Naive thymus-derived CD8-positive, alpha-beta T cell (primary cell): ENCODE measurements at regions of chr22 and their contacts with region 1.

Region 1: GRCh38 chr22:36481393-36482168 is at the start of gene TXN2:
- DNase-seq: peak; percentile 91 to 99 (median 98)
- ATAC-seq: peak; percentile 89
- H3K4me3 Mint-ChIP-seq: peak within 1 kb of the TSS; percentile 91 to 98 (median 96)
- H3K27ac Mint-ChIP-seq: peak within 1 kb of the TSS; percentile 90 to 99 (median 97)
- H3K4me1 Mint-ChIP-seq: peaks cover 17 to 33% (median 21%) of the 10 kb centered on the region in 4 donors
- H3K27me3 Mint-ChIP-seq: no peaks in the 10 kb centered on the region
- polyA plus RNA-seq, gene TXN2: 145 to 158 (median 157) TPM

Region 2: DNA sequence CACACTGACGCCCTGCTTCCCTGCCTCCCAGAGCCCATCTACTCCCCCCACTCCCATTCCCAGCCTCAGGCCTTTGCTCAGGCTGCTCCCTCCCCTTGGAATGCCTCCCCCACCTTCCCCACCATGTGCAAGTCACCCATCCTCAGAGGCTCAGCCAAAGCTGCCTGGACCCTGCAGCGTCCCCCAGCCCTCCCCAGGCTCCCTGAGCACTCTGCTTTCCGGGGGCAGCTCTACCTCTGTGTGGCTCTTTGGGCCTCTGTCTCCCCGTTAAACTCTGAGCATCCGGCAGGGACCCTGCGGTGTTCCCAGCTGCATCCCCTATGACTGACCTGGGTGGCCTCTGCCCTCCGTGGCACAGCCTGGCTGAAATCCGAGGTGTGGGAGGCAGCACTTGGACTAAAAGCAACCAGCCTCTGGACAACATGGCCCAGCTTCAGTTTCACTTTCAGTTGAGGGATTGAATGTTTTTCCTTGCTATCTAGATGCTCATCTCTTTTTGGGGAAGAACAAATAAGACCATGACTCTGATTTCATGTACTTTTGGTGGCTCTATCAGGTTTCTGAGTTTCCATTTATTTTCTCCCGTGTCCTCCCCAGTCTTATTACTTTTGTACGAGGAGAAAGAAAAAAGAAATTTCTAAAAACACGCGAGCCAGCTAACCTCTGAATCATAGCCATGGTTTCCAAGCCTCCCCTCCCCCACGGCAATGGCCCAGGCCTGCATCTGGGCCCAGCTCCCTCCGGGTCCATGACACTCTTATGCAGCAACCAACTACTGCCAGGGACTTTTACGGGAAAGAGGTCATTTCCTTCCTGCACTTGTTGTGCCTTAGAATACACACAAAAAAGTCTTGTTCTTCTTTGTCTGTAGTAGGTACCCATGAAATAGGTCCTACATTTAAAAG is 324.8 kb before region 1 on chr22:
- POLR2A ChIA-PET with region 1: interaction called, 10 read pairs
- DNase-seq: peak; percentile 53 to 77 (median 66)
- ATAC-seq: peak; percentile 26 to 65
- H3K4me3 Mint-ChIP-seq: peak overlapping the region; percentile 89 to 98 (median 94)
- H3K27ac Mint-ChIP-seq: peak overlapping the region; percentile 96 to 99 (median 98)
- H3K4me1 Mint-ChIP-seq: peaks cover 63 to 96% (median 91%) of the 10 kb centered on the region in 4 donors
- H3K27me3 Mint-ChIP-seq: no peaks in the 10 kb centered on the region

Region 3: DNA sequence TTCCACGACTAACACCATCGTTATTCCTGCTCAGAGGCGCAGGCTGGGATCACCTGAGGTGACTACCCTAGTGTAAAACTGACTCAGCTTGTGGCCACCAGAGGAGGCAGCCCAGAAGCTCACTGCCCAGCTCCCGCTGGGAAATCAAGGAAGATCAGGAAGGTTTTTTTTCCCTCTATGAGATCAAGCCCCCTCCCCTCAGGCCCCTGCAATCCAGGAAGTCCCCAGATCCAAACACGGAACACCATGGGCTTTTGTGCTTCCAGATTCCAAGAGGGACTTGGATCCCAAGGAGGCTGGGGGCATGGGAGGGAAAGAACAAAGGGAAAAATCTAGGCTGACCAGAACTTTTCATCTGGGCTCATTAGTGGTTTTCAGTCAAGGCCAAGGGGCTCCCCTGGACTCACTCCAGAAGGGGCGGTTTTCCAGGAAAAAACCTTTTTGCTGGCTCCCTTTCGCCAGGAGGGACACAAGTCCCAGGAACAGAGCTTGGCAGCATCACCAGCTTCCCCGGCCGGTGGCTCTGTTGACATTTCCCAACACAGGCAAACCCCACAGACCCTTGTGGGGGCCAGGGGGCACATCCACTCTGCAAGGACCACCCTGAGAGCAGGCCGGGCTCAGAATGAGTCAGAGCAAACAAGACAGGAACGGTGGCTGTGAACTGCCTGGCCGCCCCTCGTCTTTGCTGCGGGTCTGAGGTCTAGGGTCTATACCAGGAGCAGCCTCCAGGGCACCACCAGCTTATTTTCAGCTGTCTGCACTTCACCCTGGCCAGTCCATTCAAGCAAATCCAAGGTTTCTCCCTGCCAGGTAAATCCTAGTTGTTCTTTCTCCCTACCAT is 130.6 kb before region 1 on chr22:
- POLR2A ChIA-PET with region 1: no interaction called
- DNase-seq: no peak
- ATAC-seq: peak in 1 of 2 donors; percentile 30
- H3K4me3 Mint-ChIP-seq: peak overlapping the region; percentile 52 to 91 (median 78)
- H3K27ac Mint-ChIP-seq: peak overlapping the region; percentile 90 to 99 (median 94)
- H3K4me1 Mint-ChIP-seq: peaks cover 43 to 93% (median 92%) of the 10 kb centered on the region in 4 donors
- H3K27me3 Mint-ChIP-seq: no peaks in the 10 kb centered on the region

Region 4: GRCh38 chr22:36374603-36375024 is 107.0 kb before region 1 on chr22:
- POLR2A ChIA-PET with region 1: interaction called, 12 read pairs
- DNase-seq: peak in 2 of 10 donors; percentile 9 to 49
- ATAC-seq: no peak
- H3K4me3 Mint-ChIP-seq: peak overlapping the region; percentile 48 to 96 (median 77)
- H3K27ac Mint-ChIP-seq: peak overlapping the region; percentile 90 to 99 (median 96)
- H3K4me1 Mint-ChIP-seq: peaks cover 44 to 97% (median 93%) of the 10 kb centered on the region in 4 donors
- H3K27me3 Mint-ChIP-seq: no peaks in the 10 kb centered on the region

Region 5: GRCh38 chr22:36387752-36388518 is 93.6 kb before region 1 on chr22 and contains the start of gene MYH9:
- POLR2A ChIA-PET with region 1: interaction called, 28 read pairs
- DNase-seq: peak; percentile 96 to 99 (median 98)
- ATAC-seq: peak; percentile 71 to 81
- H3K4me3 Mint-ChIP-seq: peak within 1 kb of the TSS; percentile 87 to 98 (median 92)
- H3K27ac Mint-ChIP-seq: peak within 1 kb of the TSS; percentile 78 to 99 (median 96)
- H3K4me1 Mint-ChIP-seq: peaks cover 20 to 56% (median 38%) of the 10 kb centered on the region in 4 donors
- H3K27me3 Mint-ChIP-seq: no peaks in the 10 kb centered on the region
- polyA plus RNA-seq, gene MYH9: 51.2 to 389 (median 105) TPM

Region 6: DNA sequence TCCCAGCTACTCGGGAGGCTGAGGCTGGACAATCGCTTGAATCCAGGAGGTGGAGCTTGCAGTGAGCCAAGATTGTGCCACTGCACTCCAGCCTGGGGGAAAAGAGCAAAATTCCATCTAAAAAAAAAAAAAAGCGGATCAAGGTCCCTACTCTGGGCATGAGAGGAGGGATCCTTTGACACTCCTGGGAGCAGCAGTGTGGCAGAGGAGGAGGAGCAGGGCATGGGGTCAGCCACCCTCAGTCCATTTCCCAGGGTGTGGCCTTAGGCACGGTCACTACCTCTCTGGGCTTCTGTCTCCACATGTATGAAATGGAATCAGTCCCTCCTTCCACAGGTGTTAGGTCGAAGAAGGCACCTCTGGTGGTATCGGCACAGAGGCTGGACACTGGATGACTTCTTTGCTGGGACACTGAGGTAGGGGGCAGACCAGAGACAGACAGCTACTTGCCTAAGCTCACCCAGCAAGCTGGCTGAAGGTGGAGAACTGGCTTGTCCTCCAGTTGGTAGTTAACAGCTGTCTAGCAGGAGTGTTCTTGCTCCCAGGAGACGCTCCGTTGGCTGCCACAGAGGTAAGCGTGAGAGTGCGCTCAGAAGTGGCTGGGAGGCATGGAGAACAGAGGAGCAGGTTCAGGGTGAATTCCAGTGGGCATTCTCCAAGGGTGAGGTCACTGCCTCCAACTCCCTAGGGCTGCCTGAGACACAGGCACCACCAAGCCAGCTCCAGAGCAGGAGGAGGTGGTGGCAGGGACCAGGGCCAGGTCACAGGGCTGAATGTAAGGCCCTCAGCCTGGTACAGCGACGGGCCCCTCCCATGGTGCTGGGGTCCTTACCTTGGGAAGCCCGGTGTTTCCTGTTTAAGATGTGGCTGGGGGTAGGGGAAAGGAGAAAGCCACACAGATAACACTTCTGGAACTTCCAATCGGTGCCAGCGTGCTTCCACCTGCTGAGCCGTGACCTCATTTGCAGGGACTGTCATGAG is 19.6 kb before region 1 on chr22:
- POLR2A ChIA-PET with region 1: no interaction called
- DNase-seq: no peak
- ATAC-seq: no peak
- H3K4me3 Mint-ChIP-seq: no peak overlapping the region
- H3K27ac Mint-ChIP-seq: peak overlapping the region in 1 of 10 donors; percentile 66
- H3K4me1 Mint-ChIP-seq: peaks cover 4 to 20% (median 8%) of the 10 kb centered on the region in 4 donors
- H3K27me3 Mint-ChIP-seq: no peaks in the 10 kb centered on the region

Region 7: DNA sequence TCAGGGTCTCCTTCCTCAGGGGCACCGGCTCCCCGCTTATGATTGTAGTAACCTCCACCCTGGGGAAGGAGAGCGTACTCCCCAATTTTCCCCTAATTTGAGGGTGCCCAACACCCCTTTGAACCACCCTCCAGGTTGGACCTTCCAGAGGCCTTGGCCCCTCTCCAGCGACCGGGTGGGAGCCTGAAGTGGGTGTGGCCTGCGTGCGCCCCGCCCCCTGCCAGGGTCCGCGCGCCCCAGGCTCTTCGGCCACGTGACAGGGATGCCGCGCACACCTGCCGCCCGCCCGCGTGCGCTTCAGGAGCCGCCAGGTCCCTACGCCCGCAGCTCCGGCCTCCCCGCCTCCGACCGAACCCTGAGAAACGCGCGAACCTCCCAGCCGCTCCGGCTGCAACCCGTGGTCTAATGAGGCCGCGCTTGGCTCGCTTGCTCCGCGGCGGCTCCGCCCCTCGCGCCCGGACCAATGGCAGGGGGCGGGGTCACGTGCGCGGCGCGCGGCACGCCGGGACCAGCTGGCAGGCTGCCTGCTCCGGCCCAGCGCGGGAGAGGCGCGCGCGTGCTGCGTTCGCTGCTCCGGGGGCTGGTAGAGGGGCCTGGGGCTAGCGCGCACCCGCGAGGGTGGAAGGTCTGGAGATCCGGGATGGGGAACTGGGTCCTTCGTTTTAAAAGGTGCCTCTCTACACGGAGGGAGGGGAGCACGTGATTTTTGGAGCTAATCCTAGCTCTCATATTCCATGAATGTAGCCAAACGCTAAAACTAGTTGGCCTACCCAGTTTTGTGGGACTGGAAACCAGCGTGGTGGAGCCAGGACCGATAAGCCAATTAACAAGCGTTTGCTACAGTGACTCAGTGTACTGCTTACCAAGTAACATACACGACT is 25.3 kb after region 1 on chr22 and contains the start of gene FOXRED2:
- POLR2A ChIA-PET with region 1: interaction called, 15 read pairs
- DNase-seq: peak; percentile 84 to 93 (median 90)
- ATAC-seq: peak; percentile 94 to 95
- H3K4me3 Mint-ChIP-seq: peak within 1 kb of the TSS; percentile 67 to 85 (median 80)
- H3K27ac Mint-ChIP-seq: peak within 1 kb of the TSS; percentile 14 to 92 (median 78)
- H3K4me1 Mint-ChIP-seq: peaks cover 13 to 31% (median 19%) of the 10 kb centered on the region in 4 donors
- H3K27me3 Mint-ChIP-seq: no peaks in the 10 kb centered on the region
- polyA plus RNA-seq, gene FOXRED2: 1.8 to 6.8 (median 3.9) TPM

Region 8: GRCh38 chr22:36528795-36529751 is 47.5 kb after region 1 on chr22 and contains the start of gene EIF3D:
- POLR2A ChIA-PET with region 1: interaction called, 11 read pairs
- DNase-seq: peak; percentile 93 to 99 (median 98)
- ATAC-seq: peak; percentile 92
- H3K4me3 Mint-ChIP-seq: peak within 1 kb of the TSS; percentile 84 to 97 (median 93)
- H3K27ac Mint-ChIP-seq: peak within 1 kb of the TSS; percentile 95 to 100 (median 98)
- H3K4me1 Mint-ChIP-seq: peaks cover 4 to 34% (median 22%) of the 10 kb centered on the region in 4 donors
- H3K27me3 Mint-ChIP-seq: no peaks in the 10 kb centered on the region
- polyA plus RNA-seq, gene EIF3D: 129 to 190 (median 173) TPM